Activated CD4-positive, alpha-beta T cell treated with anti-CD3 and anti-CD28 coated beads for 36 hours (primary cell): ENCODE measurements at regions of chr2 and their contacts with region 1.

Region 1: DNA sequence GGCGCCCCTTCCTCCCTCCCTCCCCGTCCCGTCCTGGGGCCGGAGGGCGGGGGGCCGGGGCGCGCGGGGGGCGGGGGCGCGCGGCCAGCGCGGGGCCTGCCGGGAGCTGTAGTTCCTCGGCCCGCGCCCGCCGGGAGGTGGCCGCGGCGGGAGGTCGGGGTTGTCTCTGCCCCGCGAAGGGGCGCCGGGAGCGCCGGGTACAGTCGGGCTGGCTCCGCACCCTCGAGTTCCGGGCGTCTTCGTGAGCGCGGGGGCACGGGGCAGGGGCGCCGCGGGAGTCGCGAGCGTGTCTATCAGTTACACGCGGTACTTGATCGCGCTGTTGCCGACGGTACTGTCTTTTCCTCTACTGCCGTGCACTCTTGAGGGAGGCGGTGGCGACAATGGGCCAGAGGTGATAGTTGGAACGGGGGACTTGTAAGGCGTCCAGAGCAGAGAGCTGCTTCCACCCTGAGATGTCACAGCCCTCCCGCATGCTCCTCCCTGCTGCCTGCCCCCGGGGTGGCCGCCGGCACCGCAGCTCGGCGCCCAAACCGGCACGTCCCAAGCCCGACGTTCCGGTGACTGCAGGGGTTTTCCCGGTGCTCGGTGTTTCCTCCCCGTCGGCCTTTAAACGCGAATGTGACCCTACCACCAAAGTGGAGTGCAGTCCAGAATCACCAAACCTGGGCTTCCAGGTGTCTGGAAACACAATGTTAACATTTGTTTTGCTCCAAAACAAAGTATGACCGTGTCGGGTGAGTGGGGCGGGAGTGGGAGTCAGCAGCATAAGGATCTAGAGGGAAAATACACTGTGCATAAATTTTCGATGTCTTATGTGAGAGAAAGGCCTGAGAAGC is at the start of gene PRKD3:
- DNase-seq: peak; percentile 66
- ATAC-seq: peak; percentile 76
- H3K4me3 Mint-ChIP-seq: peak within 1 kb of the TSS; percentile 91
- H3K27ac Mint-ChIP-seq: peak within 1 kb of the TSS; percentile 92
- H3K4me1 Mint-ChIP-seq: peaks cover 27% of the 10 kb centered on the region
- H3K27me3 Mint-ChIP-seq: peaks cover 17% of the 10 kb centered on the region
- total RNA-seq, gene PRKD3: 17.4 to 22.8 TPM

Region 2: DNA sequence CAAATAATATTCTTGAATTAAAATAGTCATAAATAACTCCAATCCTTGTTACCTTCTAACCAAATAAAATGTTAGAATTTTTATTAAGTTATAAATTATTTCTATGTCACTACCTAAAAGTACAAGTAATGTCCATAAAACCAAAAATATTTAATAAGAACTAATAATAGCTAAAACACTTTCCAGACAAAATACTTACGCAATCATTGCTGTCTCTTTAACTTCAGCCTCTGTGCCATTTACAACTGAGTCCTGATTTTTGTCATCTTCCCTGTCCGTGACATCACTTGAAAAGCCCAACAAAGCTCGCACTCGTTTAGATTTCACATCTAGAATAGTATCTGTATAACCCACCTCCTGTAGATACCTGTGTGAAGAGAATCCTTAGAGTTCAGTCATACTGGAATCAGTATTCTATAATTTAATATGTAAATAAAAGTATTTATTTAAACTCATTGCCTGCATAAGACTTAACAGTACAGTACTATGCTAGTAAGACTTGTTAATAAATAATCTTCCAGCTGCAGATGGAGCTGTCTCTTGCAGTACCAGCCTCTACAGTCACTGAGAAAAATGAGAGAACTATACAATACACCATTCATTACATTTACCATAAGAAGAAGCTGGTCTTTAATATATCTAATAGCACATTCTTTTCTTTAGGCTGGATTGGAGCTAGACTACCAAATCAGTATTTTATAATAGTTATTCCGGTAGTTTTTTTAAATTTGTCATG is 422.5 kb before region 1 on chr2:
- CTCF ChIA-PET with region 1: no interaction called
- POLR2A ChIA-PET with region 1: no interaction called
- intact Hi-C with region 1: no loop called
- DNase-seq: no peak
- ATAC-seq: no peak
- H3K4me3 Mint-ChIP-seq: no peak overlapping the region
- H3K27ac Mint-ChIP-seq: no peak overlapping the region
- H3K4me1 Mint-ChIP-seq: no peaks in the 10 kb centered on the region
- H3K27me3 Mint-ChIP-seq: no peaks in the 10 kb centered on the region

Region 3: GRCh38 chr2:37196320-37197195 is 128.4 kb before region 1 on chr2 and contains the start of gene CEBPZOS:
- CTCF ChIA-PET with region 1: no interaction called
- POLR2A ChIA-PET with region 1: no interaction called
- intact Hi-C with region 1: loop called in 1 of 2 experiments (anchors 1 kb)
- DNase-seq: peak; percentile 93
- ATAC-seq: peak; percentile 84
- H3K4me3 Mint-ChIP-seq: peak within 1 kb of the TSS; percentile 86
- H3K27ac Mint-ChIP-seq: peak within 1 kb of the TSS; percentile 95
- H3K4me1 Mint-ChIP-seq: peaks cover 33% of the 10 kb centered on the region
- H3K27me3 Mint-ChIP-seq: no peaks in the 10 kb centered on the region
- total RNA-seq, gene CEBPZOS: 46.6 to 49.8 TPM

Region 4: GRCh38 chr2:37365669-37366068 is 40.7 kb after region 1 on chr2:
- CTCF ChIA-PET with region 1: no interaction called
- POLR2A ChIA-PET with region 1: no interaction called
- intact Hi-C with region 1: loop called in 1 of 2 experiments (anchors 2 kb)
- DNase-seq: peak; percentile 28
- ATAC-seq: peak; percentile 66
- H3K4me3 Mint-ChIP-seq: no peak overlapping the region
- H3K27ac Mint-ChIP-seq: no peak overlapping the region
- H3K4me1 Mint-ChIP-seq: no peaks in the 10 kb centered on the region
- H3K27me3 Mint-ChIP-seq: peaks cover 33% of the 10 kb centered on the region

Region 5: GRCh38 chr2:37672104-37672869 is 347.3 kb after region 1 on chr2:
- CTCF ChIA-PET with region 1: no interaction called
- POLR2A ChIA-PET with region 1: no interaction called
- intact Hi-C with region 1: loop called in 1 of 2 experiments (anchors 5 kb)
- DNase-seq: peak; percentile 80
- ATAC-seq: peak; percentile 34
- H3K4me3 Mint-ChIP-seq: peak overlapping the region; percentile 83
- H3K27ac Mint-ChIP-seq: peak overlapping the region; percentile 83
- H3K4me1 Mint-ChIP-seq: peaks cover 40% of the 10 kb centered on the region
- H3K27me3 Mint-ChIP-seq: no peaks in the 10 kb centered on the region